ENCODE measurements at regions of chr1 and their contacts with region 1.

Region 1: DNA sequence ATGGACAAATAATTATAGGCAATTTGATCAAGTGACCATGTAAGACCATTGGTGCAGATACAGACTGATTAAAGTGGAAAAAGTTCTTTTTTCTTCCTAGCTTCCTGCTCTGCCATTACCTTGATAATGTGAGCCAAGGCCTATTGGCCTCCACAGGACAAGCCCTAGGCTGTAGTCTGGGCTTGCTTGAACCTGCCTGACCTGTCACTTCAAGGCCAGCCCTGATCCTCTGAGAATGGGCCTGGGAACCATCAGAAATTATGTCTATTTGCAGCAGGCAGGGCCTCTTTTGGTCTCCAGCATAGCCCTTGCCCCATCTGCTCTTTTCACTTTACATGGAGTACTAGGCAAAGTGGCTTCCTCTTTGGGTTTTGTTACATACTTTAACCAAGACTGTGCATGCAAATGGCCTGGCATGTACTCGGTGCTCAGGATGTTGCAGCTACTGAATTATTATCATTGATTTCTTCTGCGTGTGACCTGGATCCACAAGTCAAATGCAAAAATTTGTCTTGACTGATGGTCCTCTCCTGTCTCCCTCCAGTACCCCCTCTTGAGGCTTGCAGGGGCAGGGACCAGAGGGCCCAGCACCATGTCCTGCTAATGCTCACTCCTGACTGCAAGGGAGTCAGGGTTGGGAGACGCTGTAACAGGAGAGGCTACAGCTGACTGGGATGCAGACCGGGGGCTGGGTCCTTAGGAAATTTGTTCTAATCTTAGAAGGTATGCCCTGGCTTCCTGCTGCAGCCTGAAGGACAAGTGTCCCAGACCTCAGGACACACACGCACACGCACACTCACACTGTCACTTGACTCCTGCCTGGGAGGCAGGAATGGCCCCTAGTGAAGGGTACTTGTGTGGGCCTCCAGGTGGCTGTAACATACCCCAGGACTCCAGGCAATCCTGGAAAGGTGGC is 39.4 kb downstream of the RCSD1 start:
- DNase-seq: no peak
- ATAC-seq: no peak
- H3K4me3 ChIP-seq: no peak overlapping the region
- H3K4me3 Mint-ChIP-seq: peak overlapping the region in 3 of 10 donors; percentile 11 to 22 (median 17)
- H3K27ac ChIP-seq: peak overlapping the region; percentile 24
- H3K27ac Mint-ChIP-seq: peak overlapping the region in 8 of 9 donors; percentile 26 to 84 (median 79)
- H3K4me1 ChIP-seq: peaks cover 27 to 32% of the 10 kb centered on the region in 2 donors
- H3K4me1 Mint-ChIP-seq: peaks cover 62 to 98% (median 92%) of the 10 kb centered on the region in 7 donors
- H3K27me3 ChIP-seq: no peaks in the 10 kb centered on the region
- H3K27me3 Mint-ChIP-seq: no peaks in the 10 kb centered on the region

Region 2: DNA sequence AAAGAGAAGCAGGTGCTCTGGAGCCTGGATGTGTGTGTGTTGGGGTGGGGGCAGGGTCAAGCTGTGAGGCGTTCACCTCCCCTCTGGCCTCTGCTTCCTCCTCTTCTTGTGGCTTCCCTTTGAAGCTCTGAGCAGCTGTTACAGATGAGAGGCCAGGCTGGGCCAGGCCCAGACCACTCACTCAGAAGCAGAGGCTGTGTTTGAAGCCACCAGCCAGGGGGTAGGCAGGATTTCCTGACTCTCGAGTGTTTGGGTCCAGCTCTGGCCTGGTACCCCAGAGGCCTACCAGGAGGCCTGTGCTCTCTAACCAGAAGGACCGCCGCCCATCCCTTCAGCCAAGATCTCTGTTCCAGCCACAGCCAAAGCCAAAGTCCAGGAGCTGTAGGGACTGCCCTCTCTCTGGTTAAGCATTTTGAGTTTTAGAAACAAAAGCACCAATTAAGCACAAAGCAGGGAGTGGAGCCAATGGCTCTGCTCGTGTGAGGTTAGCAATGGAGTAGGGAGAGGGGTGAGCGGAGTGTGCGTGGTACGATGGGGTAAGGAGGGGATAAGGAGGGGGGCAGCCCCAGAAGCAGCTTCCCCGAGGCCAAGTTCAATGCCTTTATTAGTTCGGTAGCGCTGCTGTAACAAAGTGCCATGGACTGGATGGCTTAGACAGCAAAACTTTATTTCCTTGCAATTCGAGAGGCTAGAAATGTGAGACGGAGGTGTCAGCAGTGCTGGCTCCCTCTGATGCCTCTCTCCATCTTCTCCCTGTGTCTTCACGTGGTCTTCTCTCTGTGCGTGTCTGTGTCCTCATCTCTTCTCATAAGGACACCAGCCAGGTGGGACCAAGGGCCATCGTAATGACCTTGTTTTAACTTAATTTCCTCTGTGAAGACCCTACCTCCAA is 19.0 kb before region 1 on chr1:
- CTCF ChIA-PET with region 1: no interaction called
- POLR2A ChIA-PET with region 1: interaction called, 3 read pairs
- intact Hi-C with region 1: loop called in 1 of 2 experiments (anchors 2 kb)
- DNase-seq: no peak
- ATAC-seq: peak; percentile 67
- H3K4me3 ChIP-seq: no peak overlapping the region
- H3K4me3 Mint-ChIP-seq: peak overlapping the region; percentile 12 to 86 (median 66)
- H3K27ac ChIP-seq: peak overlapping the region; percentile 59
- H3K27ac Mint-ChIP-seq: peak overlapping the region; percentile 75 to 94 (median 90)
- H3K4me1 ChIP-seq: peaks cover 75 to 77% of the 10 kb centered on the region in 2 donors
- H3K4me1 Mint-ChIP-seq: peaks cover 70 to 96% (median 87%) of the 10 kb centered on the region in 7 donors
- H3K27me3 ChIP-seq: no peaks in the 10 kb centered on the region
- H3K27me3 Mint-ChIP-seq: no peaks in the 10 kb centered on the region

Region 3: DNA sequence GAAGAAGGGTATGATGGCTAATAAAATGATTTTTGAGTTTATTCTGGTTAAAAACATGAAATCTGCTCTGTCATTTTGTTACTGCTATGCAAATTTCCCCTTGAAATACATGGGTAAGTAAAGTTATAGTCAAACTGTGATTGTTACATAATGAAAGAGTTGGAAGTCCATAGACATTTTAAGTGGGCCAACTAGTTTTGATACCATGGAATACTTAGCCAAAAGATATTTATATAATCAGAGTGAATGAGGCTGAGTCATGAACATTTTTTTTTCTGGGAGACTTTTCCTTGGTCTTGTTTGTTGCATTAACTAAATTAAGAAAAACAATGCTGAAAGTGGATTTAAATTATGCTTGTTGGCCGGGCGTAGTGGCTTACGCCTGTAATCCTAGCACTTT is 325.6 kb after region 1 on chr1:
- CTCF ChIA-PET with region 1: no interaction called
- POLR2A ChIA-PET with region 1: no interaction called
- intact Hi-C with region 1: no loop called
- DNase-seq: no peak
- ATAC-seq: no peak
- H3K4me3 ChIP-seq: no peak overlapping the region
- H3K4me3 Mint-ChIP-seq: no peak overlapping the region
- H3K27ac ChIP-seq: no peak overlapping the region
- H3K27ac Mint-ChIP-seq: no peak overlapping the region
- H3K4me1 ChIP-seq: no peaks in the 10 kb centered on the region
- H3K4me1 Mint-ChIP-seq: peaks cover 0 to 8% (median 0%) of the 10 kb centered on the region in 7 donors
- H3K27me3 ChIP-seq: no peaks in the 10 kb centered on the region
- H3K27me3 Mint-ChIP-seq: no peaks in the 10 kb centered on the region